B cell (primary cell): ENCODE measurements at regions of chr16 and their contacts with region 1.

Region 1: GRCh38 chr16:56600398-56600999 is 7.9 kb upstream of the MT2A start:
- DNase-seq: peak; percentile 57
- ATAC-seq: peak; percentile 61
- H3K4me3 ChIP-seq: no peak overlapping the region
- H3K4me3 Mint-ChIP-seq: no peak overlapping the region
- H3K27ac ChIP-seq: no peak overlapping the region
- H3K27ac Mint-ChIP-seq: no peak overlapping the region
- H3K4me1 ChIP-seq: no peaks in the 10 kb centered on the region
- H3K4me1 Mint-ChIP-seq: peaks cover 2% of the 10 kb centered on the region
- H3K27me3 ChIP-seq: peaks cover 0 to 11% (median 3%) of the 10 kb centered on the region in 4 experiments
- H3K27me3 Mint-ChIP-seq: peaks cover 26% of the 10 kb centered on the region
- CTCF ChIP-seq: peak; percentile 62

Region 2: DNA sequence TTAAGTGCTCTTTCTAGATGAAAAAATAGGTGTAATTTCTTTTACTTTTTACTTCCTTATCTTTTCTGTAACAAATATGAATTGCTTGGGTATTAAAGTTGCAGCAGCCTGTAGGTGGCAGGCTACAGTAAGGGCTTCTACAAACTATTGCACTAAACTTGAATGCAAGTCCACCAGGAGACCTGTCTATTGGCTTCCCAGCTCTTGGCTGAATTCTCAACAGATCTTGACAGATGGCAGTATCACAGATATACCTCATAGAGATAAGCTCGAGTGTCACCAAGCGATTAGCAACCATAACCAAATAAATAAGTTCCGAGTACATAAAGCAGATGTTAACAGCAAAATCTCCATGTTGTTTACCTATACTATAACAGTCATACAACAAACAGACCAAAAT is 86.5 kb before region 1 on chr16:
- CTCF ChIA-PET with region 1: interaction called, 14 read pairs
- POLR2A ChIA-PET with region 1: no interaction called
- intact Hi-C with region 1: loop called (anchors 1 kb)
- DNase-seq: peak; percentile 70
- ATAC-seq: peak; percentile 88
- H3K4me3 ChIP-seq: no peak overlapping the region
- H3K4me3 Mint-ChIP-seq: no peak overlapping the region
- H3K27ac ChIP-seq: no peak overlapping the region
- H3K27ac Mint-ChIP-seq: no peak overlapping the region
- H3K4me1 ChIP-seq: peaks cover 0 to 6% of the 10 kb centered on the region in 2 donors
- H3K4me1 Mint-ChIP-seq: peaks cover 36% of the 10 kb centered on the region
- H3K27me3 ChIP-seq: no peaks in the 10 kb centered on the region
- H3K27me3 Mint-ChIP-seq: no peaks in the 10 kb centered on the region
- CTCF ChIP-seq: peak; percentile 77

Region 3: DNA sequence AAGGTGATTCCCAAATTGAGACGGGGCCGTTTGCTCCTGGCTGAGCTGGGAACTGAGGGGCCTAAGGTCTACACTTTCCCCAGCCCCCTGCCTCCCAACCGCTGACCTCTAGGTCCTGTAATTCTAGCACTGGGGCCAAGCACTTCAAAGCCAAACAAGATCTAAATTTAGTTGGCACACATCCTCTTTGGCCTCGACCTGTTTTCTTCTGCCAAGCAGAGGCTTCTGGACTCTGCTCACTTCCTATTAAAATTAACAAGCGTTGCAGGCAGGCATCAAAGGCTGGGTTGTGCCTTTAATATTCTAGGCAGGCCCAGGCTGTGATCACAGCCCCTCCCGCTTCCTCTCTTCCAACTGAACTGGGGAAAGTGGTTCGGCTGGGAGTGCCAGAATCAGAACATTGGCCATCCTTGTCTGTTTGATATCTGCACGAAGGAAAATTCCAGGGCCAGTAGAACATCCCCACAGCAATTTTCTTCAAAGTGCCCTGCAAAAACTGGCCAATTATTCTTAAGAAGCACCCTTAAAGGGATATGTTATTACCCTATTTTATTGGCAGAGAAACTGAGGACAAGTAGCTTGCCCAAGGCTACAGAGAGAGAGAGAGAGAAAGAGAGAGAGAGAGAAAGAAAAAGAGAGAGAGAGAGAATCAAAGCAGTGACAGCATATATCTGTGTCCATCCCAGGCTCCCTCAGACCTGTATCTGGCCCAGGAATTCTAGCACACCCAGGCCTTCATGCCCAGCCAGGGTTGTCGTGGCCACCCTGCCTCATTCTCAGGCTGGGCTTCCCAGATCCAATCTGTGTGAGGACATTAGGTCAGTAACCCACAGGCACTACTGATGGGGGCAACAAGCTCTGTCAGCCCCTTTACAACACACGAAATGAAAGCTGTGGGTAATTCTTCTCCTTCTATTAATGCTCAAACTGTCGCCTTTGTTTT is 48.4 kb before region 1 on chr16:
- CTCF ChIA-PET with region 1: no interaction called
- POLR2A ChIA-PET with region 1: no interaction called
- intact Hi-C with region 1: no loop called
- DNase-seq: no peak
- ATAC-seq: no peak
- H3K4me3 ChIP-seq: no peak overlapping the region
- H3K4me3 Mint-ChIP-seq: no peak overlapping the region
- H3K27ac ChIP-seq: no peak overlapping the region
- H3K27ac Mint-ChIP-seq: no peak overlapping the region
- H3K4me1 ChIP-seq: peaks cover 7% of the 10 kb centered on the region in 2 donors
- H3K4me1 Mint-ChIP-seq: peaks cover 12% of the 10 kb centered on the region
- H3K27me3 ChIP-seq: peaks cover 0 to 8% (median 2%) of the 10 kb centered on the region in 4 experiments
- H3K27me3 Mint-ChIP-seq: peaks cover 14% of the 10 kb centered on the region
- CTCF ChIP-seq: no peak

Region 4: GRCh38 chr16:56630134-56630533 is 29.6 kb after region 1 on chr16:
- CTCF ChIA-PET with region 1: interaction called, 15 read pairs
- POLR2A ChIA-PET with region 1: no interaction called
- intact Hi-C with region 1: no loop called
- DNase-seq: peak; percentile 69
- ATAC-seq: peak; percentile 93
- H3K4me3 ChIP-seq: no peak overlapping the region
- H3K4me3 Mint-ChIP-seq: peak overlapping the region; percentile 26
- H3K27ac ChIP-seq: no peak overlapping the region
- H3K27ac Mint-ChIP-seq: no peak overlapping the region
- H3K4me1 ChIP-seq: peaks cover 37 to 43% of the 10 kb centered on the region in 2 donors
- H3K4me1 Mint-ChIP-seq: peaks cover 34% of the 10 kb centered on the region
- H3K27me3 ChIP-seq: peaks cover 0 to 65% (median 36%) of the 10 kb centered on the region in 4 experiments
- H3K27me3 Mint-ChIP-seq: peaks cover 59% of the 10 kb centered on the region
- CTCF ChIP-seq: no peak